Activated T-helper 1 cell treated with anti-CD3 and anti-CD28 coated beads, Interleukin-12 subunit alpha, Interleukin-12 subunit beta, Interleukin-2, Interleukin-4 antibody, amounts not matched to agents 30 ng/mL and 10 ng/mL and 1 ng/mL, durations not matched to agents 14 hours and 24 hours and 36 hours (primary cell): ENCODE measurements at regions of chr3 and their contacts with region 1.

Region 1: GRCh38 chr3:146577662-146578061 is 27.5 kb downstream of the PLSCR5 start:
- DNase-seq: no peak
- H3K4me3 Mint-ChIP-seq: no peak overlapping the region
- H3K27ac Mint-ChIP-seq: no peak overlapping the region
- H3K4me1 Mint-ChIP-seq: no peaks in the 10 kb centered on the region
- H3K27me3 Mint-ChIP-seq: peaks cover 6% of the 10 kb centered on the region

Region 2: GRCh38 chr3:146065573-146066006 is 512.1 kb before region 1 on chr3:
- intact Hi-C with region 1: loop called (anchors 1 kb)
- DNase-seq: no peak
- H3K4me3 Mint-ChIP-seq: no peak overlapping the region
- H3K27ac Mint-ChIP-seq: no peak overlapping the region
- H3K4me1 Mint-ChIP-seq: no peaks in the 10 kb centered on the region
- H3K27me3 Mint-ChIP-seq: no peaks in the 10 kb centered on the region

Region 3: DNA sequence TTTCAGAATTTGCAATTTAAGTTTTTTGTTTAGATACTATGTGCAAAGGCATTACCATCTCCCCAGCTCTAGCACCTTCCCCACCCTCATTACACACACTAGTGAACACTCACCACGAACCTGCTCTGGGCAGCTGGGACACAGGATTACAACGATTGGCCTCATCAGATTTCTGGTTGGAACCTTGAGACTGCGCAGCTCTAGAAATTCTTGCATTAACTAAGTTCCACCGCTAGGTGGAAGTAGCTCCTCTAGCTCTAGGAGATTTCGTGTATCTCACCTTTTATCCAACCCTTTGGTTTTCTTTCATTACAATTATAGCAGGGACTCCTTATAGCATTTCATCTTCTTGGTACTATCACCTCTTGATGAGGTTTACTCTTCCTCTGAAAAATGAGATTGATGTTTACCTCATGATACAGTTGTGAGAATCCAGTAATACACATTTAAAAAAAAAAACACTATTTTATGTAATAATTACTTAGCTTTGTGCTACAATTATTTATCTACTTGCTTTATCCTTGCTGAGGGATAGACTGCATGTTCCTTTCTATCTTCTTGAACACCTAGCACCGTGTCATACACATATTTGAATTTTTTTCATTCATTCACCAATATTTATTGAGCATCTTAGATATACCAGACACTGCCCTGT is 388.0 kb before region 1 on chr3:
- intact Hi-C with region 1: loop called (anchors 1 kb)
- DNase-seq: no peak
- H3K4me3 Mint-ChIP-seq: no peak overlapping the region
- H3K27ac Mint-ChIP-seq: no peak overlapping the region
- H3K4me1 Mint-ChIP-seq: no peaks in the 10 kb centered on the region
- H3K27me3 Mint-ChIP-seq: peaks cover 13% of the 10 kb centered on the region

Region 4: GRCh38 chr3:146218880-146219866 is 358.5 kb before region 1 on chr3:
- intact Hi-C with region 1: loop called (anchors 1 kb)
- DNase-seq: no peak
- H3K4me3 Mint-ChIP-seq: no peak overlapping the region
- H3K27ac Mint-ChIP-seq: no peak overlapping the region
- H3K4me1 Mint-ChIP-seq: no peaks in the 10 kb centered on the region
- H3K27me3 Mint-ChIP-seq: peaks cover 9% of the 10 kb centered on the region

Region 5: GRCh38 chr3:146625117-146625775 is 47.6 kb after region 1 on chr3:
- intact Hi-C with region 1: no loop called
- DNase-seq: no peak
- H3K4me3 Mint-ChIP-seq: no peak overlapping the region
- H3K27ac Mint-ChIP-seq: no peak overlapping the region
- H3K4me1 Mint-ChIP-seq: no peaks in the 10 kb centered on the region
- H3K27me3 Mint-ChIP-seq: peaks cover 1% of the 10 kb centered on the region

Region 6: GRCh38 chr3:147311716-147312115 is 734.1 kb after region 1 on chr3:
- intact Hi-C with region 1: no loop called
- DNase-seq: no peak
- H3K4me3 Mint-ChIP-seq: no peak overlapping the region
- H3K27ac Mint-ChIP-seq: no peak overlapping the region
- H3K4me1 Mint-ChIP-seq: no peaks in the 10 kb centered on the region
- H3K27me3 Mint-ChIP-seq: no peaks in the 10 kb centered on the region